CD8-positive, alpha-beta T cell (primary cell): ENCODE measurements at regions of chr16 and their contacts with region 1.

Region 1: DNA sequence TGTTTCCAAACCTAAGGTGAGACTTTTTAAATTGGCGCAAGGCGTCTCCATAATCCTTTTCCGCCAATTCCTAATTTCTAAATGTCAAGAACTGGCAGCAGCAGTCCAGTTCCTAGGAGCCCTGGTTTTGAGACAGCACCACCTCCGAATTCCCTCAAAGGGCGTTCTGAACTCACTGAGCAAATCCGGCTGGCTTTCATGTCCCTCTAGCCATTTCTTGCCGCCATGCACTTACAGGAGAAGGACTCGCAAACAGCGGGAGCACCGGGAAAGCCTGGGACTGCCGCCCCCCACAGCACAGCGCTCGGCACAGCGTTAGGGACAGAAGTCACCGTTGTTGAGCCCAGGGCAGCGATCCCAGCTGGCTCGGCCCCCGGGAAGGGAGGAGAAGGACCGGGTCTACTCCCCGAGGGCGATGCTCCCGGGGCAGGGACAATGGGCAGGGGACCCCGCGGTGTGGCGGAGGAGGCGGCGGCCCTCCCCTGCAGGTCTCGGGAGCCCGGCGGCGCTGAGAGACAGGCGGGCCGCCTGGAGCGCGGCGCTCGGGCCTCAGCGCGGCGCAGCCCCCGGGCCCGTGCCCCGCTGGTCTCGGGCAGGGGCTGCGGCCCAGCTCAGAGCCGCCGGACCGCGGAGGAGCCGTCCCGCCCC is 545 bp downstream of the ARHGAP17 start:
- DNase-seq: peak in 6 of 9 experiments; percentile 19 to 55 (median 31)
- ATAC-seq: peak; percentile 41
- H3K4me3 ChIP-seq: peak overlapping the region; percentile 65 to 73
- H3K4me3 Mint-ChIP-seq: peak overlapping the region; percentile 93
- H3K27ac ChIP-seq: peak overlapping the region; percentile 75 to 83
- H3K27ac Mint-ChIP-seq: peak overlapping the region; percentile 96
- H3K4me1 ChIP-seq: peaks cover 51% of the 10 kb centered on the region
- H3K4me1 Mint-ChIP-seq: peaks cover 70% of the 10 kb centered on the region
- H3K27me3 ChIP-seq: no peaks in the 10 kb centered on the region
- H3K27me3 Mint-ChIP-seq: no peaks in the 10 kb centered on the region
- CTCF ChIP-seq: no peak

Region 2: DNA sequence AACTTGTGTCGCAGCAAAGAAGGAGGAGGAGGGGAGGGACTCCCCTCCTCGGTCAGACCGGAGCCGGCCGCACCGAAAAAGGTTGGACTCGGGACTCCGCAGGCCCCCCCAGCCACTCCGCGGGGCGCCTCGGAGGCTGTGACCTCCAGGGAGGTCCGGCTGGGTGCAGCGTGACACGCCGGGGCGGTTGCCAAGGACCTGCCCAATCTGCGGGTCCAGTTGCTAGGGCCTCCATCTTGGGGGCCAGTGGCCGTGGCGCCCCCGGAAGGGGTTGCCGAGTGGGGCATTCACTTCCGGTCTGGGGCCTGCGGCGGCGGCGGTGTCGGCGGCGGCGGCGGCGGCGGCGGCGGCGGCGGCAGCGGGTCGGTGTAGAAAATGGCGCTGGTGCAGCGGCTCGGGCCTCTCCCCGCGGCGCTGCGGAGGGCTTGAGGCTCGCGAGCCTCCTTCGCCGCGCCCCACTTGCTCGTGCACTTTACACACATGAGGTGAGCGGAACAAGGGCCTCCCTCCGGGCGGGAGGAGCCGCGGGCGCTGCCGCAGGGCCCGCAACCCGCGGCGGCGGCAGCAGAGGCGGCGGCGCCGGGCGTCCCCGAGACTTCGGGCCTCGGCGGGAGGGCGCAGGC is 285.2 kb before region 1 on chr16 and contains the start of gene TNRC6A:
- CTCF ChIA-PET with region 1: no interaction called
- POLR2A ChIA-PET with region 1: no interaction called
- intact Hi-C with region 1: loop called in 1 of 2 experiments (anchors 10 kb)
- DNase-seq: peak; percentile 61 to 92 (median 76)
- ATAC-seq: peak; percentile 78
- H3K4me3 ChIP-seq: peak within 1 kb of the TSS; percentile 93 to 97
- H3K4me3 Mint-ChIP-seq: peak within 1 kb of the TSS; percentile 95
- H3K27ac ChIP-seq: peak within 1 kb of the TSS; percentile 97 to 98
- H3K27ac Mint-ChIP-seq: peak within 1 kb of the TSS; percentile 98
- H3K4me1 ChIP-seq: peaks cover 40% of the 10 kb centered on the region
- H3K4me1 Mint-ChIP-seq: peaks cover 45% of the 10 kb centered on the region
- H3K27me3 ChIP-seq: no peaks in the 10 kb centered on the region
- H3K27me3 Mint-ChIP-seq: no peaks in the 10 kb centered on the region
- CTCF ChIP-seq: no peak
- total RNA-seq, gene TNRC6A: 65.2 to 73.4 TPM

Region 3: DNA sequence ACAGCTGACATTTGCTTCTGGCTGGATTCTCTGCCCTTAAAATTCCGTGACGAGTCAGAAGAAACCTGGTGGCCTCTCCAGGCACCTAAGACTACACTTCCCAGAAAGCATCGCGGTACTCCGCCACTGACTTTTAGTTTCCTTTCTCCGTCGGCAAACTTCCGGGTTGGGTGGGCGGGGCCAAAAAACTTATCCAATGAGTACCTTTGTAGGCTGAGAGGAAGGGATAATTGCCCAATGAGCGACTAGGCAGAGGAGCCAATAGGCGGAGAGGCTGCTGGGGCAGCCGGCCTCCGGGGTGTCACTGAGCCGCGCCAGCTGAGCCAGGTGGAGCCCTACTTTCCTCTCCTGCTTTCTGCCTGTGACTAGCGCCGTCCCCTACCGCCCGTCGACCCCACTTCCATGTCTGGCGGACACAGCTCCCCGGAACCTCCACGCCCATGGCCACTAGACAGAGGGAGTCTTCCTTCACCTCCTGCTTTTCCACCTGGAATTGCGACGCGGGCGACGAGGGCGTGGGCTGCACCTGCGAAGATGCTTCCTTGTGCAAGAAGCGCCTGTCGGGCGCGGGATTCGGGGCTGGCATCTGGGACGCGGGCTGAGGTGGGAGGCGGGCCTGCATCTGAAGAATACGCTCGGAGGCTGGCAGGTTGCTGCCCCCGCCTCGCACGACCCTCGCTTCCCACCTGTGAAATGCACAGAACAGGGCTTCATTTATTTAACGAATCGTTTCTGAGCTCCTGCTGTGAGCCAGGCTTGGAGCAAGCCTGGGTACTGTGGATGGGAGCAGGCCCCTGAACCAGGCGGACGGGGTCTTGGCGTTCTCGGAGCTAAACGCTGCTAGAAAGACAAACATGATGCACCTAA is 17.1 kb after region 1 on chr16:
- CTCF ChIA-PET with region 1: interaction called, 12 read pairs
- POLR2A ChIA-PET with region 1: interaction called, 20 read pairs
- intact Hi-C with region 1: loop called (anchors 1 kb)
- DNase-seq: peak; percentile 79 to 97 (median 90)
- ATAC-seq: peak; percentile 99
- H3K4me3 ChIP-seq: peak overlapping the region; percentile 88 to 94
- H3K4me3 Mint-ChIP-seq: peak overlapping the region; percentile 96
- H3K27ac ChIP-seq: peak overlapping the region; percentile 65 to 68
- H3K27ac Mint-ChIP-seq: peak overlapping the region; percentile 94
- H3K4me1 ChIP-seq: peaks cover 14% of the 10 kb centered on the region
- H3K4me1 Mint-ChIP-seq: peaks cover 39% of the 10 kb centered on the region
- H3K27me3 ChIP-seq: no peaks in the 10 kb centered on the region
- H3K27me3 Mint-ChIP-seq: no peaks in the 10 kb centered on the region
- CTCF ChIP-seq: no peak

Region 4: GRCh38 chr16:25060920-25061319 is 46.3 kb after region 1 on chr16:
- CTCF ChIA-PET with region 1: no interaction called
- POLR2A ChIA-PET with region 1: interaction called, 16 read pairs
- intact Hi-C with region 1: no loop called
- DNase-seq: peak in 7 of 9 experiments; percentile 17 to 80 (median 37)
- ATAC-seq: peak; percentile 99
- H3K4me3 ChIP-seq: peak overlapping the region in 1 of 2 experiments; percentile 18
- H3K4me3 Mint-ChIP-seq: peak overlapping the region; percentile 77
- H3K27ac ChIP-seq: peak overlapping the region; percentile 34 to 76
- H3K27ac Mint-ChIP-seq: peak overlapping the region; percentile 94
- H3K4me1 ChIP-seq: peaks cover 57% of the 10 kb centered on the region
- H3K4me1 Mint-ChIP-seq: peaks cover 66% of the 10 kb centered on the region
- H3K27me3 ChIP-seq: no peaks in the 10 kb centered on the region
- H3K27me3 Mint-ChIP-seq: no peaks in the 10 kb centered on the region
- CTCF ChIP-seq: no peak

Region 5: GRCh38 chr16:25079637-25080378 is 65.2 kb after region 1 on chr16:
- CTCF ChIA-PET with region 1: no interaction called
- POLR2A ChIA-PET with region 1: no interaction called
- intact Hi-C with region 1: no loop called
- DNase-seq: no peak
- ATAC-seq: no peak
- H3K4me3 ChIP-seq: no peak overlapping the region
- H3K4me3 Mint-ChIP-seq: no peak overlapping the region
- H3K27ac ChIP-seq: no peak overlapping the region
- H3K27ac Mint-ChIP-seq: no peak overlapping the region
- H3K4me1 ChIP-seq: no peaks in the 10 kb centered on the region
- H3K4me1 Mint-ChIP-seq: no peaks in the 10 kb centered on the region
- H3K27me3 ChIP-seq: no peaks in the 10 kb centered on the region
- H3K27me3 Mint-ChIP-seq: no peaks in the 10 kb centered on the region
- CTCF ChIP-seq: no peak

Region 6: DNA sequence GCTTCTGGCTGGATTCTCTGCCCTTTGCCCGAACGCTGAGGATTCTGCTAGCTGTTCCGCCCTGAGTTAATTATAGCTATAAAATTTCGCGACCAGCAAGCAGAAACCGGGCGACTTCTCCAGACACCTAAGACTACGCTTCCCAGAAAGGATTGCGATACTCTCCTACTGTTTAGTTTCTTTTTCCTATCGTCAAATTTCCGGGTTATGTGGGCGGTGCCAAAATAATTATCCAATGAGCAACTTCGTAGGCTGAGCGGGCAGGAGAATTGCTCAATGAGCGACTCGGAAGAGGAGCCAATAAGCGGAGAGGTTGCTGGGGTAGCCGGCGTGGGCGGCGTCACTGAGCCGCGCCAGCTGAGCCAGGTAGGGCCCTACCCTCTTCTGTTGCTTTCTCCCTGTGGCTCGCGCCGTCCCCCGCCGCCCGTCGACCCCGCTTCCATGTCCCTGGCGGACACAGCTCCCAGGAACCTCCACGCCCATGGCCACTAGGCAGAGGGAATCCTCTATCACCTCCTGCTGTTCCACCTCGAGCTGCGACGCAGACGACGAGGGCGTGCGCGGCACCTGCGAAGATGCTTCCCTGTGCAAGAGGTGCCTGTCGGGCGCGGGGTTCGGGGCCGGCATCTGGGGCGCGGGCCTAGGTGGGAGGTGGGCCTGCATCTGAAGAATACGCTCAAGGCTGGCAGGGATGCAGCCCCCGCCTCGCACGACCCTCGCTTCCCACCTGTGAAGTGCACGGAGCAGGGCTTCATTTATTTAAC is 97.0 kb after region 1 on chr16 and contains the start of gene LCMT1:
- CTCF ChIA-PET with region 1: interaction called, 6 read pairs
- POLR2A ChIA-PET with region 1: interaction called, 25 read pairs
- intact Hi-C with region 1: loop called (anchors 1 kb)
- DNase-seq: peak; percentile 79 to 97 (median 89)
- ATAC-seq: peak; percentile 89
- H3K4me3 ChIP-seq: peak within 1 kb of the TSS; percentile 85 to 90
- H3K4me3 Mint-ChIP-seq: peak within 1 kb of the TSS; percentile 95
- H3K27ac ChIP-seq: peak within 1 kb of the TSS; percentile 62 to 70
- H3K27ac Mint-ChIP-seq: peak within 1 kb of the TSS; percentile 93
- H3K4me1 ChIP-seq: peaks cover 29% of the 10 kb centered on the region
- H3K4me1 Mint-ChIP-seq: peaks cover 68% of the 10 kb centered on the region
- H3K27me3 ChIP-seq: no peaks in the 10 kb centered on the region
- H3K27me3 Mint-ChIP-seq: no peaks in the 10 kb centered on the region
- CTCF ChIP-seq: no peak
- total RNA-seq, gene LCMT1: 20.9 to 28.6 TPM